ENCODE measurements at regions of chr12 and their contacts with region 1.

Region 1: GRCh38 chr12:2387103-2387834 is 334.5 kb downstream of the CACNA1C start:
- DNase-seq: no peak
- H3K4me3 Mint-ChIP-seq: no peak overlapping the region
- H3K27ac Mint-ChIP-seq: no peak overlapping the region
- H3K4me1 Mint-ChIP-seq: no peaks in the 10 kb centered on the region
- H3K27me3 Mint-ChIP-seq: peaks cover 14% of the 10 kb centered on the region

Region 2: DNA sequence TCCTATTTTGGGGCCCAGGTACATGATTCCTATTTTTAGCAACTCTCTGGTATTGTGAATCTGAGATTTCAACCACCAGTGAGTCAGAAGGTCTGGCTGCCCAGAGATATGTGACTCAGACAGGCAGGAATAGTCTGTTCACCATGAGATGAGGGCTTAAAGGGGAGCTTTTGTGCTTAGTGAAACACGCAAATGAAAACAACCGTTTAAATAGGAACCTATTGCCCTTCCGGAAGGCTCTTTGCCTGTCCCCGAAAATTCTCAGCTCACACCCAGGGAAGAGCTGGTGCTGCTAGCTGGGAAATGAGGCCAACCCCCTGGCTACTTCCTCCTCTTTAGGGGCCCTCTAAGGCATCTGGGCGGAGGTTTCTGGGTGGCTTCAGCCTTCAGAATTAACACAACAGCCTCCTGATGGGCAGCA is 50.9 kb before region 1 on chr12:
- intact Hi-C with region 1: no loop called
- DNase-seq: no peak
- H3K4me3 Mint-ChIP-seq: no peak overlapping the region
- H3K27ac Mint-ChIP-seq: no peak overlapping the region
- H3K4me1 Mint-ChIP-seq: peaks cover 6% of the 10 kb centered on the region
- H3K27me3 Mint-ChIP-seq: peaks cover 4% of the 10 kb centered on the region

Region 3: GRCh38 chr12:2358986-2359658 is 28.1 kb before region 1 on chr12:
- intact Hi-C with region 1: loop called (anchors 1 kb)
- DNase-seq: no peak
- H3K4me3 Mint-ChIP-seq: no peak overlapping the region
- H3K27ac Mint-ChIP-seq: peak overlapping the region; percentile 52
- H3K4me1 Mint-ChIP-seq: peaks cover 34% of the 10 kb centered on the region
- H3K27me3 Mint-ChIP-seq: peaks cover 18% of the 10 kb centered on the region

Region 4: GRCh38 chr12:4156317-4156716 is 1769.0 kb after region 1 on chr12:
- intact Hi-C with region 1: no loop called
- DNase-seq: no peak
- H3K4me3 Mint-ChIP-seq: no peak overlapping the region
- H3K27ac Mint-ChIP-seq: peak overlapping the region; percentile 72
- H3K4me1 Mint-ChIP-seq: peaks cover 85% of the 10 kb centered on the region
- H3K27me3 Mint-ChIP-seq: no peaks in the 10 kb centered on the region